ENCODE measurements at regions of chr7 and their contacts with region 1.

Region 1: GRCh38 chr7:104196161-104196560 is 11.7 kb downstream of the ORC5 start:
- DNase-seq: no peak
- H3K4me3 ChIP-seq: no peak overlapping the region
- H3K27ac ChIP-seq: no peak overlapping the region
- H3K4me1 ChIP-seq: no peaks in the 10 kb centered on the region
- CTCF ChIP-seq: no peak

Region 2: DNA sequence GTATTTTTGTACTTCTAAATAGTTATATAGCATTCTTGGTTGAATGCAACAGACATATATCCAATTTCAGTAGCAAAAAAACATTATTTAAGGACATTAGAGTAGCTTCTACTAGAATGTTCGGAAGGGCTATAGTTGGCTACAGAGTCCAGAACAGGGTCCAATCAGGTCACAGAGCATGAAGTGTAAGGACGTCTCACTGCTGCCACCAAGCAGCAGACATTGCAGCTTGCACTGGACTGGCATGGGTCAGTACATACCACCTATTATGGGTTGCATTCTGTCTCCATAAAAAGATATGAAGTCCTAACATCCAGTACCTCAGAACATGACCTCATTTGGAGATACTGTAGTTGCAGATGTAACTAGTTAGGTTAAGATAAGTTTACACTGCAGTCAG is 219.5 kb after region 1 on chr7:
- CTCF ChIA-PET with region 1: no interaction called
- POLR2A ChIA-PET with region 1: no interaction called
- intact Hi-C with region 1: no loop called
- DNase-seq: no peak
- H3K4me3 ChIP-seq: no peak overlapping the region
- H3K27ac ChIP-seq: no peak overlapping the region
- H3K4me1 ChIP-seq: no peaks in the 10 kb centered on the region
- CTCF ChIP-seq: peak; percentile 29; the same call in 1 of the 2 replicates

Region 3: DNA sequence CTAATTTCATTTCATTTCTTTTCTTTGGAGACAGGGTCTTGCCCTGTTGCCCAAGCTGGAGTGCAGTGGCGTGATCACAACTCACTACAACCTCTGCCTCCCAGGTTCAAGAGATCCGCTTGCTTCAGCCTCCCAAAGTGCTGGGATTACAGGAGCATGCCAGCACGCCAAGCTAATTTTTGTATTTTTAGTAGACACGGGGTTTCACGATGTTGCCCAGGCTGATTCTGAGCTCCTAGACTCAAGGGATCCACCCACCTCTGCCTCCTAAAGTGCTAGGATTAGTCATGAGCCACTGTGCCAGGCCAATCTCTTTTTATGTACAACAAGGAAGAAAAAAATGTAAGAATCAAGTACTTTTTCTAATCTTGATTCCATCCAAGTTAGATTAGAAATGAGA is 807.1 kb after region 1 on chr7:
- CTCF ChIA-PET with region 1: no interaction called
- POLR2A ChIA-PET with region 1: interaction called, 10 read pairs
- intact Hi-C with region 1: no loop called
- DNase-seq: no peak
- H3K4me3 ChIP-seq: no peak overlapping the region
- H3K27ac ChIP-seq: no peak overlapping the region
- H3K4me1 ChIP-seq: peaks cover 52% of the 10 kb centered on the region
- CTCF ChIP-seq: no peak